AG04450 (cell line): ENCODE measurements at regions of chr20 and their contacts with region 1.

Region 1: DNA sequence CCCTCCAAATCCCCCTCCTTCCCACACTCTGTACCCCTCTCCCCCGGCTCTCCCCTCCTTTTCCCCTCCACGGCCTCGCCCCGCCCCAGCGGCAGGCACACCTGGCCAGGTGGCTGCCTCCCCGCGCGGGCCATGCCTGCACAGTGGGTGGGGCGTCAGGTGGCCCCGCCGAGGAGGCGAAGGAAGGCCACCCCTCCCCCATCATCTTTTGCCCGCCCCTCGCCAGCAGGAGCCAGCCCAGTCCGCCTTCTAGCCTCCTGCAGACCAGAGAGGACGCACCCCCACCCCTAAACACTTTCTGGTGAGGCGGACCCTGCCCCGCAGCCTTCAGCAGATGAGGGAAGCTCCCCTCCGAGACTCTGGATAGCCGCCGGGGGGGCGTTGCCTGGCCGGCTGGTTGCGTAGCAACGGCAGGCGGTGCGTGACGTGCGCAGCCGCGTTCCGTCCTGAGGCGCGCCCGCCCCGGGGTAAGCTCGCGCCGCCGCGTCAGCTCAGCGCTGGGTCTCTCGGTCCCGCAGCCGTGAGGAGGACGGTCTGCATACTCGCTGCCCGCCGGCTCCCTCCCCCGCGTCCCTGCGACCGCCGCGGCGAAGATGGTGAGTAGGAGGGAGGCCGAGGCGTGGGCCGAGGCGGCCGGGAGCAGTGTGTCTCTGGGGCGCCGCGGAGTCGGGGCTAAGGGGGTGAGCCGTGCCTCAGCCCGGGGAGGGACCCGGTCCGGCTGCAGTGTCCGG is at the start of gene DSTN:
- DNase-seq: peak; percentile 88
- H3K4me3 ChIP-seq: peak within 1 kb of the TSS; percentile 87
- H3K27ac ChIP-seq: peak within 1 kb of the TSS; percentile 95
- H3K27me3 ChIP-seq: no peaks in the 10 kb centered on the region
- CTCF ChIP-seq: no peak
- polyA plus RNA-seq, gene DSTN: 318 and 414 TPM in 2 replicates

Region 2: DNA sequence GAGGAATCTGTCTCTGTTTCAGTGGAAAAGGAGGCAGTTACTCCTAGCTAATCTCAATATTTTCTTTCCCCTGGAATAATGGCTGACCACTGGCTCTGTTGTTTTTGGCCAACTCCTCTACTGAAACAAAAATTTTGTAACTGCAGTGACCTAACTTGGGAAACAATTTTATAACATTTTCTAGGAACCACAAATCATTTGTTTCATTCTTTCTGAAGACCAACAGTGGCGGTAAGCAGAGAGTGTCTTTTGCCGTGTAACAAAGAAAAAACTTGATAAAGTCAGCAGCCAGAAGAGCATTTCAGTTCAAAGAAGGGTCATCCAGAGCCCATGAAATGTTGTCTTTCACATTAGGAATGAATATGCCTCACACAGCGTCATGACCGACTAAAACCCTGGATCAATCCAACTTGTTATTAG is 26.8 kb before region 1 on chr20:
- CTCF ChIA-PET with region 1: interaction called, 3 read pairs
- POLR2A ChIA-PET with region 1: interaction called, 59 read pairs
- DNase-seq: no peak
- H3K4me3 ChIP-seq: no peak overlapping the region
- H3K27ac ChIP-seq: peak overlapping the region; percentile 82
- H3K27me3 ChIP-seq: no peaks in the 10 kb centered on the region
- CTCF ChIP-seq: no peak